Transverse colon (tissue), 4 donors: ENCODE measurements at regions of chr2 and their contacts with region 1.

Region 1: GRCh38 chr2:85750587-85751575 is 2.9 kb upstream of the ATOH8 start:
- DNase-seq: peak; percentile 75
- H3K4me3 ChIP-seq: no peak overlapping the region
- H3K27ac ChIP-seq: peak overlapping the region in 1 of 4 donors; percentile 23
- H3K4me1 ChIP-seq: peaks cover 18 to 55% (median 40%) of the 10 kb centered on the region in 4 donors
- H3K27me3 ChIP-seq: peaks cover 38% of the 10 kb centered on the region
- CTCF ChIP-seq: peak; percentile 69 to 81 (median 77)
- EP300 ChIP-seq: no peak
- POLR2A ChIP-seq: no peak

Region 2: DNA sequence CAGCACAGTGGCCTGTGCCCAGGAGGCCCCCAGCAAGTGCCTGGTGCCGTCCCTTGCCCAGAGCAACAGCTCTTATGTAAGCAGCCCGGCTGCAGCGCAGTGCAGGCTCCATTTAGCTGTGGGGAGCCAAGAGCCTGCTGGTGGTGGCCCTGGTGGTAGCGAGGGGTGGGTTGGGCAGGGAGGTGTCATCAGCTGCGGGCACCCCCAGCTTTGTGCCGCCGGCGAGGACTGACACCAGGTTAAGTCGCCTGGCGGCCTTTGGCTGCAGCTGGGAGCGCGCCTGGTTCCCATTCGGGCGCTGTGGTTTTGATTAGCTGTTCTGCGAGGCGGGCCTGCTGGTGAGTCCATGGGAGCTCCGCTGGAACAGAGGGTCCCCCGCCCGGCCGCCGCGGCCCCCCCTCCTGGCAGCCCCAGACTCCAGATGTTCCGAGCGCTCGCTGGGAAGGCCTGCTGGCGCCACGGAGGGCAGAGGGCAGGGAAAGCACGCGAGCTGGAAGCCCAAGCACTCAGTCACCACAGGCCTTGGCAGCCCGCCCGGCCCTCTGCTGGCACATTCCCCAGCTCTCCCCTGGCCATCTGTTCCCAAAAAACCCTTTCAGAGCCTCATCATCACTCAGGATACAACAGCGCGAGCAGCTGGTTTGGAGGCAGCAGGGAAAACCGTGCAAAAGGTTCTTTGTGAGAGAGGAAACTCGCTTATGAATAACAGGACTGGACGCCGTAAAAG is 21.3 kb after region 1 on chr2:
- in situ Hi-C with region 1: no loop called
- intact Hi-C with region 1: loop called (anchors 1 kb)
- DNase-seq: peak; percentile 91
- H3K4me3 ChIP-seq: peak overlapping the region in 1 of 4 donors; percentile 6
- H3K27ac ChIP-seq: peak overlapping the region; percentile 82 to 93 (median 84)
- H3K4me1 ChIP-seq: peaks cover 59 to 69% (median 62%) of the 10 kb centered on the region in 4 donors
- H3K27me3 ChIP-seq: no peaks in the 10 kb centered on the region
- CTCF ChIP-seq: peak in 3 of 5 experiments; percentile 20 to 34 (median 23)
- EP300 ChIP-seq: peak; percentile 76
- POLR2A ChIP-seq: no peak

Region 3: DNA sequence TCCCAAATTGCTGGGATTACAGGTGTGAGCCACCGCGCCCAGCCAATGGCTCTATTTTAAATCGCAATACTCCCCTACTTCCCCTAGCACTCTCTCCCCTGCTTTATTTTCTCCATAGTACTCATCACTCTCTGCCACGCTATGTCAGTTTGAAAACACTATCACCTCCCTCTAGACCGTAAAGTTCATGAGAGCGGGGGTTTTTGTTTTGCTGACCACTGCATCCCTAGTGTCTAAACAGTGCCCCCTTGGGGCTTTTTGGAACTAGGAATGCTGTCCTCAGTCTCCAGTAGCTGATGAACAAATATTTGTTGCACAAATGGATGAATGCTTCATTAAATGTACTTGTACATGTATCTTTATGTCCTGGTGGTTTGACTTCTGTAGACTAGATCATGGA is 47.0 kb after region 1 on chr2:
- in situ Hi-C with region 1: no loop called
- intact Hi-C with region 1: loop called (anchors 5 kb)
- DNase-seq: peak; percentile 8
- H3K4me3 ChIP-seq: no peak overlapping the region
- H3K27ac ChIP-seq: no peak overlapping the region
- H3K4me1 ChIP-seq: peaks cover 6 to 24% (median 13%) of the 10 kb centered on the region in 4 donors
- H3K27me3 ChIP-seq: no peaks in the 10 kb centered on the region
- CTCF ChIP-seq: peak in 4 of 5 experiments; percentile 26 to 46 (median 35)
- EP300 ChIP-seq: no peak
- POLR2A ChIP-seq: no peak